Mammary epithelial cell (primary cell): ENCODE measurements at regions of chr20 and their contacts with region 1.

Region 1: GRCh38 chr20:1177680-1178079 is 7.1 kb downstream of the TMEM74B start:
- DNase-seq: no peak
- H3K4me3 ChIP-seq: no peak overlapping the region
- H3K27ac ChIP-seq: no peak overlapping the region
- H3K4me1 ChIP-seq: no peaks in the 10 kb centered on the region
- H3K27me3 ChIP-seq: no peaks in the 10 kb centered on the region
- CTCF ChIP-seq: peak in 1 of 2 donors; percentile 7

Region 2: DNA sequence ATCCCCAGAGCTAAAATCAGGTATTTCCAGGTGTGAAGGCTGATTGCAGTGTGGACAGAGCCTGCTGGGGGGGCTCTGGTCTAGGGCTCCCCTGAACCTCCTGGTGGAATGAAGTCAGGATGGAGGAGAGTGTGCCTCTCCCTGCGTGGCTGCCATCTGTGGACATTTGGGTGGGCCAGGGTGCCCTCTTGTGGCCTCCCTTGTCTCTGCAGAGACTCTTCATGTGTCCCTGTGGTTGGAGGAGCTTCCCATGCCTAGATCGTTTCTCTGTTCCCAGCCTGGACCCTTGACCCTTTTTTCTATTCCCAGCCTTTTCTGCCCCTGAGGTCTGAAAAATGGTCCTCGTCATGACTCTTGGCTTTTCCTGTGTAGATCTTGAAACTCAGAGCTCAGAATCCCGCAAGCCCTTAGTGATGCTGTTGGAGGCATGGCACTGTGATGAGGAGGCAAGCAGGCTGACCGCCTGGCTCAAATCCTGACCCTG is 69.2 kb before region 1 on chr20:
- CTCF ChIA-PET with region 1: no interaction called
- dilution Hi-C with region 1: loop called (anchors 5 kb)
- in situ Hi-C with region 1: no loop called
- intact Hi-C with region 1: no loop called
- DNase-seq: peak; percentile 24
- H3K4me3 ChIP-seq: no peak overlapping the region
- H3K27ac ChIP-seq: no peak overlapping the region
- H3K4me1 ChIP-seq: no peaks in the 10 kb centered on the region
- H3K27me3 ChIP-seq: no peaks in the 10 kb centered on the region
- CTCF ChIP-seq: peak; percentile 78 to 84

Region 3: DNA sequence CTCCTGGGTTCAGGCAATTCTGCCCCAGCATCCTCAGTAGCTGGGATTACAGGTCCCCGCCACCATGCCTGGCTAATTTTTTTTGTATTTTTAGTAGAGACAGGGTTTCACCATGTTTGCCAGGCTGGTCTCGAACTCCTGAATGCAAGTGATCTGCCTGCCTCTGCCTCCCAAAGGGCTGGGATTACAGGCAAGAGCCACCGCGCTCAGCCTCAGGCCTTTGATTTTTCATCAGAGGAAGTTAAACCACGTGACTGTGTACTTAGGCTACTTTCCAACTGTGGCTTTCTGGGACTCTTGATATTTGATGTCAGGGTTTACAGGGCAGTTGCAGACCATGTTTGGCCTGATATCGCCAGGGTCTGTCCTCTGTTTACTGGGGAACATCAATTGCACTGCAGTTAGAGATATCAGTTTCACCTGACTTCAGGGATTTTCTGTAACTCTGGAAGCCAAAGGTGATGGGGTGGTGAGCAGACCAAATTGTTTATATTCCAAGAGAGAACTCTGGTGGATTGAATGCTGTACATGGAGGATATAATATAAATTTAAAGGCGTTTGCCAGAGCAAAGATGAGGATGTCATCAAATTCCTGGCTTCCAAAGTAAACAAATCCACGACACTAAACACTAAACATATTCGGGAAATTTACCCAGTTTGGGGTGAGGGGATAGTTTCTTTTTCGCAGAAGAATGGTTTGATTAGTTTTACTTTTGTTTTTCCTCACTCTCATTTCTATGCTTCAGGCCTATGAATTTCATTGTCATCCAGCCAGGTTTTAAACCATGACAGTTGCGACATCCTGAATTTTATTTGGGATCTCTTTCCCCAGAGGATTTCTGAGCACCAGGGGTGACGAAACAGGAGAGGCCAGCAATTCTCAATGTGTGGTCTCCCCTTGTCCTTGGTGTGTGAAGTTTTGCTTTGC is 55.0 kb before region 1 on chr20:
- CTCF ChIA-PET with region 1: no interaction called
- dilution Hi-C with region 1: no loop called
- in situ Hi-C with region 1: no loop called
- intact Hi-C with region 1: no loop called
- DNase-seq: no peak
- H3K4me3 ChIP-seq: no peak overlapping the region
- H3K27ac ChIP-seq: no peak overlapping the region
- H3K4me1 ChIP-seq: peaks cover 44% of the 10 kb centered on the region
- H3K27me3 ChIP-seq: no peaks in the 10 kb centered on the region
- CTCF ChIP-seq: no peak

Region 4: GRCh38 chr20:1232286-1233111 is 54.8 kb after region 1 on chr20:
- CTCF ChIA-PET with region 1: no interaction called
- dilution Hi-C with region 1: no loop called
- in situ Hi-C with region 1: no loop called
- intact Hi-C with region 1: no loop called
- DNase-seq: no peak
- H3K4me3 ChIP-seq: no peak overlapping the region
- H3K27ac ChIP-seq: no peak overlapping the region
- H3K4me1 ChIP-seq: no peaks in the 10 kb centered on the region
- H3K27me3 ChIP-seq: peaks cover 19% of the 10 kb centered on the region
- CTCF ChIP-seq: no peak